ENCODE measurements at regions of chr9 and their contacts with region 1.

Region 1: GRCh38 chr9:120868676-120869359 is 8.2 kb downstream of the PHF19 start:
- DNase-seq: peak; percentile 97 to 99 (median 99)
- H3K4me3 ChIP-seq: peak overlapping the region; percentile 15 to 77 (median 53)
- H3K27ac ChIP-seq: peak overlapping the region in 1 of 2 experiments; percentile 78
- H3K4me1 ChIP-seq: peaks cover 0 to 24% (median 22%) of the 10 kb centered on the region in 4 experiments
- H3K27me3 ChIP-seq: no peaks in the 10 kb centered on the region

Region 2: GRCh38 chr9:120886490-120886967 is 17.7 kb after region 1 on chr9:
- CTCF ChIA-PET with region 1: interaction called, 10 read pairs
- POLR2A ChIA-PET with region 1: interaction called, 5 read pairs
- DNase-seq: no peak
- H3K4me3 ChIP-seq: no peak overlapping the region
- H3K27ac ChIP-seq: no peak overlapping the region
- H3K4me1 ChIP-seq: peaks cover 7 to 35% (median 28%) of the 10 kb centered on the region in 4 experiments
- H3K27me3 ChIP-seq: no peaks in the 10 kb centered on the region

Region 3: GRCh38 chr9:120892748-120893610 is 24.2 kb after region 1 on chr9:
- CTCF ChIA-PET with region 1: interaction called, 16 read pairs
- POLR2A ChIA-PET with region 1: interaction called, 6 read pairs
- DNase-seq: peak; percentile 89 to 99 (median 98)
- H3K4me3 ChIP-seq: no peak overlapping the region
- H3K27ac ChIP-seq: peak overlapping the region in 1 of 2 experiments; percentile 28
- H3K4me1 ChIP-seq: peaks cover 13 to 56% (median 49%) of the 10 kb centered on the region in 4 experiments
- H3K27me3 ChIP-seq: no peaks in the 10 kb centered on the region

Region 4: GRCh38 chr9:120909904-120910303 is 41.1 kb after region 1 on chr9:
- CTCF ChIA-PET with region 1: interaction called, 10 read pairs
- POLR2A ChIA-PET with region 1: interaction called, 3 read pairs
- DNase-seq: peak; percentile 30 to 80 (median 70)
- H3K4me3 ChIP-seq: no peak overlapping the region
- H3K27ac ChIP-seq: no peak overlapping the region
- H3K4me1 ChIP-seq: peaks cover 0 to 23% (median 11%) of the 10 kb centered on the region in 4 experiments
- H3K27me3 ChIP-seq: no peaks in the 10 kb centered on the region

Region 5: GRCh38 chr9:120936011-120936763 is 67.4 kb after region 1 on chr9:
- CTCF ChIA-PET with region 1: interaction called, 24 read pairs
- POLR2A ChIA-PET with region 1: interaction called, 4 read pairs
- DNase-seq: peak; percentile 81 to 83 (median 82)
- H3K4me3 ChIP-seq: peak overlapping the region in 2 of 7 experiments; percentile 26 to 45
- H3K27ac ChIP-seq: peak overlapping the region in 1 of 2 experiments; percentile 33
- H3K4me1 ChIP-seq: peaks cover 32 to 60% (median 54%) of the 10 kb centered on the region in 4 experiments
- H3K27me3 ChIP-seq: no peaks in the 10 kb centered on the region

Region 6: DNA sequence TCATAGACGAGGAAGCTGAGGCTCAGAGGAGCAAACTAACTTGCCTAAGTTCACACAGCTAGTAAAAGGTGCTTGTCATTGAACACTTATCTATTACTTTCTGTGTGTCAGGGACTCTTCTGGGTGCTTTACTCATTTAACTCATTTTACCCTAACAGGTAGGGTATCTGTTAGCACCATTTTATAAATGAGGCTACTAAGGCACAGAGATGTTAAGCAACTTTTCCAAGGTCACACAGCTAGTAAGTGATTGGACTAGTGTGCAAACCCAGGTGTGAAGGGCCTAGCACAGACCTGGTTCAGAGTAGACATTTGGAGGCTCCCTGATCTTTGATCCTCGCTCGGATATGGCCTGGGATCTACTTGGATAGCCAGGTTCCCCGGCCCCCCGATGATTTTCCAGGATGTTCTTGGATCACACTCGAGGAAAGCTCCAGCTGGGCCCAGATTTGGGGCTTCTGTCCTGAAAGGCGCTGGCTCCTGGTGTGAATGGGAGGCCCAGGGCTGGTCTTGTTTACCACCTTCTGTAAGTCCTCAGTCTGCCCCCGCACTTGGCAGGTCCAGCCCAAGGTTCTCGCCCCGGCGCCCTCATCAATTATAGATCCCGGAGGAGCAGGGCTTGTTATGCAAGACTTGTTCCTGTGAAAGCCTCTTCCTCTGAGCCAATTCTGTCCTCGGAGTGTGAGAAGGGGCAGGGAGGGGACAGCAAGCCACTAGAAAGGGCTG is 436.6 kb after region 1 on chr9:
- CTCF ChIA-PET with region 1: no interaction called
- POLR2A ChIA-PET with region 1: no interaction called
- DNase-seq: no peak
- H3K4me3 ChIP-seq: no peak overlapping the region
- H3K27ac ChIP-seq: no peak overlapping the region
- H3K4me1 ChIP-seq: peaks cover 0 to 7% (median 5%) of the 10 kb centered on the region in 4 experiments
- H3K27me3 ChIP-seq: peaks cover 0 to 2% (median 0%) of the 10 kb centered on the region in 5 experiments